Lower leg skin (tissue), 4 donors: ENCODE measurements at regions of chr20 and their contacts with region 1.

Region 1: GRCh38 chr20:4666001-4666479 is 55.7 kb upstream of the PRND start:
- DNase-seq: no peak
- H3K4me3 ChIP-seq: no peak overlapping the region
- CTCF ChIP-seq: no peak
- POLR2A ChIP-seq: no peak

Region 2: GRCh38 chr20:3919352-3919751 is 746.7 kb before region 1 on chr20:
- intact Hi-C with region 1: loop called (anchors 5 kb)
- DNase-seq: no peak
- H3K4me3 ChIP-seq: no peak overlapping the region
- CTCF ChIP-seq: no peak
- POLR2A ChIP-seq: no peak